HAP-1 (cell line): ENCODE measurements at regions of chr15 and their contacts with region 1.

Region 1: DNA sequence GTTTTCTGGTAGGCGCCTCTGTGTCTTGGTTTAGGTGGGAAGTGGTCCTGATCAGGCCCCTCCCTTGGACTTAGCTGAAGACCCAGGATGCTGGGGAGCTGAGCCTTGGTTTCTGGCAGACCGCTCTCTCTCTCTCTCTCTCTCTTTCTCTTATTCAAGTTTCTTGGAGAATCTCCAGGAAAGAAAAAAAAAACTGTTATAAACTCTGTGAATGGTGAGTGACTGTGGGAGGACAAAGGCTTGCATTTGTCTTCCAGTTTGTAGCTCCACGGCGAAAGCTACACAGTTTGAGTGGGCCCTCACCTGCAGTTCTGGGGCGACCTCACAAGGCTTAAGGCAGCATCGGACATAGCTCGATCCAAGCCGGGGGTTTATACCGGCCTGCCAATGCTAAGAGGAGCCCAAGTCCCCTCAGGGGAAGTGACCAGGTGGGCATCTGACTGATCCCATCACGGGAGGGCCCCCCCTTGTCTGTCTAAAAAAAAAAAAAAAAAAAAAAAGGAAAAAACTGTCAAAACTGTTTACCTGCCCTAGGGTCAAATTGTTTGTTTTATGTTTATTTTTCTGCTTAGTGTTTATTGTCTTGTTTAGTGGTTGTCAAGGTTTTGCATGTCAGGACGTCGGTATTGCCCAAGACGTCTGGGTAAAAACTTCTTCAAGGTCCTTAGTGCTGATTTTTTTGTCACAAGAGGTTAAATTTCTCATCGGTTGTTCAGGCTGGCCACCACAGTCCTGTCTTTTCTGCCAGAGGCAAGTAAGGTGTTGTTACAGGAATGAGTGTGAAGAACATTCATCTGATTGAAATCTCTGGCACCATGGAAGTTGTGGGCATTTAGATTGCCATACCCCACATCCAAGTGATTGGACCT is 7.3 kb downstream of the DET1 start:
- DNase-seq: peak; percentile 45 to 47
- H3K4me3 ChIP-seq: no peak overlapping the region
- H3K4me1 ChIP-seq: peaks cover 37% of the 10 kb centered on the region
- H3K27me3 ChIP-seq: no peaks in the 10 kb centered on the region

Region 2: DNA sequence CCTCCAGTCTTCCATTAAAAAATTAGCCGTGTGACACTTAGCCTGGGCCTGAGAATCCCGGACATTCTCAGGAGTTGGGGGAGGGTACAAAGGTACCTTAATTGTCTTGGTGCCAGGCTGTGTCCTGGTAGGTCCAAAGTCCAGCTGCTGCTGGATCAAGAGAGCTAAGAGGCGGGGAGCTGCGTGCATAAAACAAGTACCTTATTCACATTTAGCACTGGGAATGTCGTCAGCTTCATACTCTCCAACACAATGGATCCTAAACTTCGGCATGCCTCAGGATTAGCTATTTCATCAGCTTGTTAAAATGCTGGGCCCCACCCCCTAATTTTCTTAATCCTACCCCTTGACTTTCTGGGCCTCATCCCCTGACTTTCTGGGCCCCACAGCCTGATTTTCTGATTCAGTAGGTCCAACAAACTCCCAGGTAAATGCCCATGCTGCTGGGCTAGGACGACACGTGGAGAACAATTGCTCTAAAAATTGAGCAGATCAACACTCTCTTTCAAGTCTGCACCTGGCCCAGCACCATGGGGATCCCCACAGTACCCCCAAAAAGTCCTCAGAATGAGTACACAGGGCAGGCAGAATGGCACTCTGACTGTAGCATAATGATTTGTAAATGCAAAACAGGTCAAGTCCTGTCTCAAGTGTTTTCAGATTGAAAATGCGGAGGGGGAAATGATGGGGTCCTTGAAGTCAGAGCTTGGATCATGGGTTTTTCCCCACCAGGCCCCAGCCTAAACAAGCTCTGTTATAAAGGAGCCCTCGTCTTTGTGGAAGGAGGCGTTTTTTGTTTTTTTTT is 76.3 kb after region 1 on chr15:
- in situ Hi-C with region 1: loop called (anchors 5 kb)
- DNase-seq: peak; percentile 81 to 92
- H3K4me3 ChIP-seq: no peak overlapping the region
- H3K4me1 ChIP-seq: peaks cover 61% of the 10 kb centered on the region
- H3K27me3 ChIP-seq: peaks cover 6% of the 10 kb centered on the region; the same call in 1 of the 2 replicates